AG04450 (cell line): ENCODE measurements at regions of chr4 and their contacts with region 1.

Region 1: GRCh38 chr4:181528570-181529184 is 714.5 kb upstream of the TENM3 start:
- DNase-seq: peak; percentile 45
- H3K4me3 ChIP-seq: no peak overlapping the region
- H3K27ac ChIP-seq: no peak overlapping the region
- H3K27me3 ChIP-seq: no peaks in the 10 kb centered on the region
- CTCF ChIP-seq: peak; percentile 97

Region 2: DNA sequence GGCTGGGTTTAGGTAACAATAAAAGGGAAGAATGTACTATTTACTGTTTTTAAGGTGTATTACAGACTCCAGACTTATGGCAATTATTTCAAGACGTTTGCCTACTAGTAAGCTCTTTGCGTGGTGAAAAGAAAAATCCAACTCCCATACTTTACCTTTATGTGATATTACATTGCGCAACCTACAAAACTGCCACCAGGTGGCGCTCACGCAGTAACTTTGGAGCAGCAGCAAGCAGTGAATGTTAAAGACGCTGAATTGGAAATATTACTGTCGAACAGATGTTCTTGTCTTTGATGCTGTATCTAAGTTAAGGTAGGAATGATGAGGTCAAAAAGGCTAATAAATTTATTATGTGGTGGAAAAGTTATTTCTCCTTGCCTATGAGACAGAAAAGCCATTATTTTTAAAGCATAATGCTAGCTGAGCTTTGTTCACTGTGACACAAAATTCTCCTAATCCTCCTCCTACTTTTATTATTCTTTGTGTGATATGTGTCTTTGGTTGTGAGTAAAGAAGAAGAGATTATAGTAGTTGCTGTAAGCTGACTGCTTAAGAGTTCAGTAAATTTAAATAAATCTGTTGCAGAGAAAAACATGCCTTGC is 385.3 kb before region 1 on chr4:
- CTCF ChIA-PET with region 1: interaction called, 96 read pairs
- POLR2A ChIA-PET with region 1: no interaction called
- DNase-seq: peak; percentile 56
- H3K4me3 ChIP-seq: no peak overlapping the region
- H3K27ac ChIP-seq: no peak overlapping the region
- H3K27me3 ChIP-seq: no peaks in the 10 kb centered on the region
- CTCF ChIP-seq: peak; percentile 91

Region 3: DNA sequence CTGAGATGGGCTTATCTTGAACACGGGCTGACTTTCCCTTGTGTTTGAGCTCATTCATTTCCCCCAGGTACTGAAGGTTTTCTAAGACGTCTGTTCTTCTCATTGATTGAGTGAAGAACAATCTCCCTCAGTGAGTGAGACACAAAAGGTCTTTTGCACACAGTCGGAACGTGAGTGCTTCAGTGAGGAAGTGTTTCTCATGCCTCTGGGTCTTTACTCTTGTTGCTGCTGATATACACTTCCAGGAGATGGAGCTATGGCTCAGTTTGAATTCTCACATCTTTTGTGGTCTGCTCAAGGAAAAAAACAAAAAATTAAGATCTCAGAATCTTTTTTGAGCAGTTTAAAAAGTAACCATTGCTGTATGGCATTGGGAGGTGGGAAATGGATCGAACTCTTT is 267.4 kb before region 1 on chr4:
- CTCF ChIA-PET with region 1: interaction called, 26 read pairs
- POLR2A ChIA-PET with region 1: no interaction called
- DNase-seq: peak; percentile 3
- H3K4me3 ChIP-seq: no peak overlapping the region
- H3K27ac ChIP-seq: no peak overlapping the region
- H3K27me3 ChIP-seq: no peaks in the 10 kb centered on the region
- CTCF ChIP-seq: peak; percentile 61

Region 4: DNA sequence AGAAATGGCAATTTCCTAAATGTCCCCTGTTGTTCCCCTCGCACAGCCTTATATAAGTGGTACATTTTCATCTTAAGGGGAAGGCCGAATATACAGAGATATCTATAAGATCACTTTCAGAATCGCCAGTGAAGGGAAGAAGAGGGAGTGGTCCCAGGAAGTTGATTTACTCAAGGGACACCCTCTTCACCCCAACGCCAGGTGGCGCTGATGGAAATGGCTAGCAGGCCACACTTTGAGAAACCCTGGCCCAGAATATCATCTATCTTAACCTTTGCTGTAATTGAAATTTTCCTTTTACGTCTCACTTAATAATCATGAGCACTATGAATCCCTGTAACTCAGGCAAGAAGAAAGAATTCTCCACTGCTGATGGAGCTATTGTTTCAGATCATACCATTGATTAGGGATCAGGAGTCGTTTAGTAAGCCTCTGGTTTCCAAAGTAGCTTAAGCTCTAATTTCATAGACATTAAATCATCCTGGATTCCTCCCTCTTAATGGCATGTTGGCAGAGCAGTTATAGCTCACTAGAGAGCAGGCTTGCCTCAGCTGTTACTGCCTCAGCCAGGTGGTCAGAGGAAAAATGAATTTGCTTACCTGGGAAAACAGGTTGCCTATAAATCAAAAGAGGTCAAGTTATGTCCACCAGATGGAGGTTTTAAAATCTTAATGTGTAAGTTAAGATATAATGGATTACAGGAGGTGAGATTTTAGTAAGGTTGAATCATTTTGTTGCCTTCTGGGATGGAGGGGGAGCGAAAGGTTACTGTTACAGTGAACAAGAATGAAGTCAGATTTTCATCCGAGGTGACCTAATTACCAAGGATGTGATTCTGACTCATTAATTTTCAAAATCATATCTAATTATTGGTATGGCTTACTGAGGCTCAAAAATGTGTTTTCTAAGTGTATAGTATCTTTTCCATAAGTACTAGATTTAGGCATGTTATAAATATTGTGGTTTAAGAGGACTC is 226.7 kb before region 1 on chr4:
- CTCF ChIA-PET with region 1: interaction called, 79 read pairs
- POLR2A ChIA-PET with region 1: no interaction called
- DNase-seq: peak; percentile 7
- H3K4me3 ChIP-seq: no peak overlapping the region
- H3K27ac ChIP-seq: no peak overlapping the region
- H3K27me3 ChIP-seq: no peaks in the 10 kb centered on the region
- CTCF ChIP-seq: peak; percentile 78

Region 5: DNA sequence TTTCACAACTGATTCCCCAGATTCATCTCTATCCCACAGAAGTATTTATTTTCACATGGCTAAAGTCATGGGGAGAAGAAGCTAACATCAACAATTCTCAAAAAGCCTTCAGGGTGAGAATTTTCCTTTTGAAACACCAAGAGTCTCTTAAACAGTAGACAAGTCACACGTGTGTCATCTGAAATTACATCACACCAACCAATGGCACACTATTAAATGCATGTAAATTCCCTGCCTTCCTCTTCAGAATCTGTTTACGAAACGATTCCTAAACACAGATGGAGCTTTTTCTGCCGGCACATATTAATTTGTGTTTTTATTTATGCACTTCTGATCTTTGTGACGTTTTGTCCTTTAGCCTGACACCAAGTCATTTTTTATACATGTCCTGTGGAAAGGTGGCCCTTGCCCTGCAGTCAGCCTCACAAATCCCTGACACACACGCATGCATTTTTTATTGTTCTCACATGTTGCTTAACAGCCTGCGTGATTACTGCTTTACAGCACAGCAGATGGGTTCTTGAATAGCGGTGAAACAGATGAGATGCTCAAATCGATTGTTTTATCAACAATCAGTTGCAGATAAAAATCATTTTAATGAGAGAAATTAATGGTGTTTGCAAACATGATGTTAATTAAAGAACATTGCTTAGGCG is 21.4 kb before region 1 on chr4:
- CTCF ChIA-PET with region 1: interaction called, 12 read pairs
- POLR2A ChIA-PET with region 1: no interaction called
- DNase-seq: no peak
- H3K4me3 ChIP-seq: no peak overlapping the region
- H3K27ac ChIP-seq: no peak overlapping the region
- H3K27me3 ChIP-seq: peaks cover 19% of the 10 kb centered on the region
- CTCF ChIP-seq: no peak

Region 6: DNA sequence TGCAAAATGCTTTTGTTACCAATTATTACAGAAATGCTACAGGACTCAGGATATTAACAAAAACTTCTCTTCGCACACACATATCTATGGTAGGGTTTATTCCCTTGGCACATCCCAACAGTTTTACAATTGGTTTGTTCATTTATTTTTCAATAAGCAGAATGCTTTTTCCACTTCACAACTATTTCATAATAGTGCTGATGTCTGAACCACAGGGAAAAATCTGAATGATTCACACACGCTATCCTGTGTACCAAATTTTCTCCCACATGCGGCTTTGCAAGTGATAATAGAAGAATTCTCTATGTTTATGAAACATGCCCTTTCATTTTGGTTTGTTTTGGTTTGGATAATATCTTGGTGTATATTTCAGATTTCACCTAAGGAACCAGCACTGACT is 11.2 kb before region 1 on chr4:
- CTCF ChIA-PET with region 1: interaction called, 31 read pairs
- POLR2A ChIA-PET with region 1: no interaction called
- DNase-seq: no peak
- H3K4me3 ChIP-seq: no peak overlapping the region
- H3K27ac ChIP-seq: no peak overlapping the region
- H3K27me3 ChIP-seq: no peaks in the 10 kb centered on the region
- CTCF ChIP-seq: no peak